HepG2 (cell line): ENCODE measurements at regions of chr9 and their contacts with region 1.

Region 1: DNA sequence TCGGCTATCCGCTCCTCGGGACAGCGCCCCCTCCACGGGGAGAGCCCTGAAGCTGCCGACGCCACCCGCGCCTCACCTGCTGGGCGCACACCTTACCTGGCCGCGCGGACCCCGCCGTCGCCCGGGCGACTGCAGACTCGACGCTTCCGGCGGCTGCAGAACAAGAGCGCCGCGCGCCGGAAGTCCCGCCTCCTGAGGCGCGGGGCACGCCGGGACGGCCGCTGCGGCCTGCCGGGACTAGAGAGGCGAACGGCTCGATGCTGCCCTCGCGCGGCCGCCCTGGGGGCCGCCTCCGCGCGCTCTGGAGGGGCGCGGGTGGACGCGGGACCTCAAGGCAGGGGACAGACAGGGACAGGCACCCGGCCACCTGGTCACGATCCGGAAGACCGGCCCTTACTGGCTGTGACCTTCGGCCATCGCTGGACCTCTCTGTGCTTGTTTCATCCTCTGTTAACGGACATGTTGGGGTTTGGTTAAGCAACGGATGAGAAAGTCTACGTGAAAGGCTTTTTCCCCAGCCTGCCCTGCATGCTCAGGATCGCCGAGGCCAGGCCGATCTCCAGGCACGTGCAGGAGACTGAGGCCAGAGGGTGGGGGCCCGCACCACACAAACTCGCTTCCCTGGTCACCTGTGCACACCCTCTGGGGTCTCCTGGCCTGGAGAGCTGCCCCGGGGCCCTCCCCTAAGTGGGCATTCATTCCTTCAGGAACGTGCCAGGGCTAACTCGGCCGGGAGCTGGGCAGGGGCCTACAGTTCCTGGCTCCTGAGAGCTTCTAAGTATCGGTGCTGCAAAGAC is at the start of gene SNAPC4:
- DNase-seq: peak; percentile 77
- ATAC-seq: peak; percentile 91
- H3K4me3 ChIP-seq: peak within 1 kb of the TSS; percentile 78 to 98 (median 97)
- H3K27ac ChIP-seq: peak within 1 kb of the TSS; percentile 53
- H3K4me1 ChIP-seq: peaks cover 20% of the 10 kb centered on the region
- H3K27me3 ChIP-seq: no peaks in the 10 kb centered on the region
- CTCF ChIP-seq: peak; percentile 89
- EP300 ChIP-seq: no peak
- POLR2A ChIP-seq: peak; percentile 57 to 86; a peak in 3 of 4 replicates
- RAD21 ChIP-seq: peak; percentile 95
- total RNA-seq, gene SNAPC4: 4.3 and 6.0 TPM in 2 replicates

Region 2: DNA sequence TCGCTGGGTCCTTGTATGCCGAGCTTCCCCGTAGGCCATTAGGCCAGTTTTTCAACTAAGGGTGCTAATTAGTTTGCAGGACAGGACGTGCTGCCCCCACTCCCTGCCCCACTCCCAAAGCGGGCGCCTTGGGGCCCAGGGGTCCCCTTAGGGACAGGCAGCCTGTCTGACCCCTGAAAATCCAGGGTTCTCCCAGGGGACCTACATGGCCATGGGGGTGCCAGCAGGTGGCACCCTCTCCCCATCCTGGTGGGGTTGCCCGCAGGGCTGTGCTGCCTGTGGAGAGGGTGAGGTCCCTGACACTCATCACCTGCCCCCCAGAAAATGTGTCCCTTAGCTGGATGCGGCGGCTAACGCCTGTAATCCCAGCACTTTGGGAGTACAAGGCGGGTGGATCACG is 87.8 kb before region 1 on chr9:
- CTCF ChIA-PET with region 1: interaction called, 15 read pairs
- POLR2A ChIA-PET with region 1: interaction called, 3 read pairs
- in situ Hi-C with region 1: no loop called
- intact Hi-C with region 1: no loop called
- DNase-seq: no peak
- ATAC-seq: peak; percentile 79
- H3K4me3 ChIP-seq: no peak overlapping the region; a peak in 1 of 6 replicates
- H3K27ac ChIP-seq: no peak overlapping the region
- H3K4me1 ChIP-seq: peaks cover 44% of the 10 kb centered on the region
- H3K27me3 ChIP-seq: no peaks in the 10 kb centered on the region; a peak in 3 of 5 replicates
- CTCF ChIP-seq: peak; percentile 89
- EP300 ChIP-seq: no peak
- POLR2A ChIP-seq: no peak
- RAD21 ChIP-seq: peak; percentile 80

Region 3: GRCh38 chr9:136339173-136339957 is 60.9 kb before region 1 on chr9:
- CTCF ChIA-PET with region 1: interaction called, 12 read pairs
- POLR2A ChIA-PET with region 1: no interaction called
- in situ Hi-C with region 1: no loop called
- intact Hi-C with region 1: loop called (anchors 1 kb)
- DNase-seq: peak; percentile 62
- ATAC-seq: peak; percentile 78
- H3K4me3 ChIP-seq: no peak overlapping the region; a peak in 1 of 6 replicates
- H3K27ac ChIP-seq: no peak overlapping the region
- H3K4me1 ChIP-seq: peaks cover 42% of the 10 kb centered on the region
- H3K27me3 ChIP-seq: peaks cover 4 to 20% of the 10 kb centered on the region in 2 experiments; a peak in 3 of 5 replicates
- CTCF ChIP-seq: peak; percentile 95
- EP300 ChIP-seq: no peak; a peak in 1 of 4 replicates
- POLR2A ChIP-seq: no peak
- RAD21 ChIP-seq: peak; percentile 90